Heart right ventricle (tissue), 16 donors: ENCODE measurements at regions of chr5 and their contacts with region 1.

Region 1: GRCh38 chr5:121870489-121870888 is 18.8 kb downstream of the FTMT start:
- DNase-seq: no peak
- ATAC-seq: no peak
- H3K4me3 ChIP-seq: no peak overlapping the region
- H3K27ac ChIP-seq: no peak overlapping the region
- H3K4me1 ChIP-seq: no peaks in the 10 kb centered on the region
- H3K27me3 ChIP-seq: no peaks in the 10 kb centered on the region
- CTCF ChIP-seq: peak in 5 of 9 donors; percentile 15 to 47 (median 32)

Region 2: DNA sequence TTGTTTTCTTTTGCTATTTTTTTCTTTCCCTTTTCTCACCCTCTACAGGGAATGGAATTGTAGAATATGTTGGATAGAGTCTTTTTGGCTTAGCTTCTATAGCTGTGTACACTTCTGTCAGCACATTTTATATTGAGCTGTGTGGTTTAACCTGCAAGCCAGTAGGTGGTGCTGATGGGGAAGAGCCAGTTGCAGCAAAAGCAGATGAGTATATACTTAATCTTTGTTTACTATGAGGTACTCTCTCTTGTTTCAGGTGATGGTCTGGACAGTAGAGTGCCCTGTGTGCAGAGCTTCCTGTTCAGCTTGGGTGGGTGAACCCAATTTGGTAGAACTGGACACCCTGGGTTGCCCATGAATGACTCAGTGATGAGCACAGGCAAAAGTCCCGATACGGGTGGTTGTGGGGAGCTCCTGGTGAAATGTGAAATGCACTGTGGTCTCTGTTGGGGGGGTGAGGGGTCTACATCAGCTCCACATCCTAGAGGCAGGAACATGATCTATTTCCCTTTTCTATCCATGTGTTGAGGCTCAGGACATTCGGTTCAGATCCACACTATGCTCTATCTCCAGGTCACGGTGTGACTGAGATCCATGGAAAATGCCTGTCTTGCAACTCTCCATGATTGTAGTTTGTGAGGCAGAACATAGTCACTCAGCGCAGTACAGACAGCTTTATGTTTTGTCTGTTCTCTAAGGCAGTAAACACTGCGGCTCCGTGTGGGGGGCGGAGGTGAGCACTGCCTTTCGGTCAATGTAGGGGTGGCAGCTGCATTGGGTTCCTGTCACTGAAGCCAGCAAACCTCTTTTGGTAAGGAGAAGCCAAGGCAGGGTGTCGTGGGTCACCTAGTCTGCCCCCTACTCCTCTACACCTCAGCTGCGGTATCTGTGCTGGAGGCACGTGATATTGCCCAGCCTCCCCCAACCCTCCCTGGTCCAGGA is 1053.2 kb before region 1 on chr5:
- intact Hi-C with region 1: loop called in 1 of 10 experiments (anchors 5 kb)
- DNase-seq: no peak
- ATAC-seq: no peak
- H3K4me3 ChIP-seq: no peak overlapping the region
- H3K27ac ChIP-seq: no peak overlapping the region
- H3K4me1 ChIP-seq: no peaks in the 10 kb centered on the region
- H3K27me3 ChIP-seq: no peaks in the 10 kb centered on the region
- CTCF ChIP-seq: peak in 7 of 9 donors; percentile 1 to 47 (median 27)

Region 3: DNA sequence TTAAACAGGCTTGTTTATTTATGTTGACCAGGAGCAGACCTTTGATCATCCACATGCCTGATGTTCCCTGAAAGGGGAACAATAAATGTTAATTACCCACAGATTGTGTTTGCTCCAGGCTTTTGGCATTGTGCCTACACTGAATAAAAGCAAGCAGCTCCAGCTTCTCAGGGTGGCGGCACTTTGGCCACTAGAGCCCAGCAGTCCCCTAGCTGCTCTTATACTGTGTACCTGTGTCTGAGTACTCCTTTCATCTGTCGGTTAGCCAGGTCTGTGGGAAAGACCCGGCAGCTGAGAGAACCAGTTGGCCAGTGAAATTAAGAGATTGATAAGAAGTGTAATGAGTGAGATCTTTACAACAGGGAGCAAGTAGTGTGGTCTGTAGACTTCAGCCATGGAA is 273.6 kb before region 1 on chr5:
- intact Hi-C with region 1: no loop called
- DNase-seq: no peak
- ATAC-seq: no peak
- H3K4me3 ChIP-seq: no peak overlapping the region
- H3K27ac ChIP-seq: no peak overlapping the region
- H3K4me1 ChIP-seq: no peaks in the 10 kb centered on the region
- H3K27me3 ChIP-seq: no peaks in the 10 kb centered on the region
- CTCF ChIP-seq: no peak

Region 4: GRCh38 chr5:121691478-121691877 is 179.0 kb before region 1 on chr5:
- intact Hi-C with region 1: no loop called
- DNase-seq: no peak
- ATAC-seq: no peak
- H3K4me3 ChIP-seq: no peak overlapping the region
- H3K27ac ChIP-seq: no peak overlapping the region
- H3K4me1 ChIP-seq: no peaks in the 10 kb centered on the region
- H3K27me3 ChIP-seq: no peaks in the 10 kb centered on the region
- CTCF ChIP-seq: no peak

Region 5: GRCh38 chr5:121915765-121916164 is 45.3 kb after region 1 on chr5:
- intact Hi-C with region 1: no loop called
- DNase-seq: no peak
- ATAC-seq: no peak
- H3K4me3 ChIP-seq: no peak overlapping the region
- H3K27ac ChIP-seq: no peak overlapping the region
- H3K4me1 ChIP-seq: no peaks in the 10 kb centered on the region
- H3K27me3 ChIP-seq: no peaks in the 10 kb centered on the region
- CTCF ChIP-seq: no peak

Region 6: GRCh38 chr5:122259995-122260394 is 389.5 kb after region 1 on chr5:
- intact Hi-C with region 1: no loop called
- DNase-seq: no peak
- ATAC-seq: no peak
- H3K4me3 ChIP-seq: no peak overlapping the region
- H3K27ac ChIP-seq: no peak overlapping the region
- H3K4me1 ChIP-seq: no peaks in the 10 kb centered on the region
- H3K27me3 ChIP-seq: peaks cover 0 to 4% (median 0%) of the 10 kb centered on the region in 7 donors
- CTCF ChIP-seq: no peak